Activated CD8-positive, alpha-beta T cell treated with anti-CD3 and anti-CD28 coated beads for 36 hours (primary cell): ENCODE measurements at regions of chr19 and their contacts with region 1.

Region 1: DNA sequence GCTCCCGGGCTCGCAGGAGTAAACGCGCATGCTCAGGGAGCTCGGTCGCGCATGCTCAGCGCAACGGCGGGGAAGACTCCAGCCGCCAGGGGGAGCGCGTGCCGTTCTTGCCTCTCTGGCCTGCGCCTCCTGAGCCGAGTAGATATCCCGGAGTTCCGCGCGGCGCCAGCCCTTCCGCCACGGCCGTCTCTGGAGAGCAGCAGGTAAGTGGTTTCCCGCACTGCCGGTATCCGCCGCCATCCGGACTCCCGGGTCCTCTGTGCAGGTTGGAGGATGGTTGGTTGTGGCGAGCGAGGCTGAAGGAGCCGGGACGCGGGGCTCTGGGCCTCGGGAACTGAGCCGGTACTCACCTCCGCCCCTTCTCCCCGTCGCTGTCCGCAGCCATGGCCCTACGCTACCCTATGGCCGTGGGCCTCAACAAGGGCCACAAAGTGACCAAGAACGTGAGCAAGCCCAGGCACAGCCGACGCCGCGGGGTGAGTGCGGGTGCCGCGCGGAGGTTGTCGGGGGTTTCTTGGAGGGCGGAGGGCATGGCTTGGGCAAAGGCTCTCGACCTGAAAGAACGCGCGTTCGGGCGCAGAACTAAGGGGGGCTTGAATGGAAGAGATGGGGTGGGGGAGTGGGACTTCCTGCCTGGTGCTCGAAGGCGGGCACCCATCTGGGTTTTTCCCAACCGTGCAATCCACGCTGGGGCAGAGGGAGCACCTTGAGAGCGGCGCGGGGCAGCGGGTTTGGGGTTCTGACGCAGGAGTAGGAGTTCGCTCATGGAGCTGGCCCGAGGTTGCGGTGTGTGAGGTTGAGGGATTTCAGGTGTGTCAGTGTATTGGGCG is at the start of gene RPL36:
- DNase-seq: peak; percentile 99
- ATAC-seq: peak; percentile 52
- H3K4me3 Mint-ChIP-seq: peak within 1 kb of the TSS; percentile 99
- H3K27ac Mint-ChIP-seq: peak within 1 kb of the TSS; percentile 97
- H3K4me1 Mint-ChIP-seq: peaks cover 20% of the 10 kb centered on the region
- H3K27me3 Mint-ChIP-seq: no peaks in the 10 kb centered on the region
- CTCF ChIP-seq: peak; percentile 98
- total RNA-seq, gene RPL36: 1,711 to 1,715 TPM

Region 2: DNA sequence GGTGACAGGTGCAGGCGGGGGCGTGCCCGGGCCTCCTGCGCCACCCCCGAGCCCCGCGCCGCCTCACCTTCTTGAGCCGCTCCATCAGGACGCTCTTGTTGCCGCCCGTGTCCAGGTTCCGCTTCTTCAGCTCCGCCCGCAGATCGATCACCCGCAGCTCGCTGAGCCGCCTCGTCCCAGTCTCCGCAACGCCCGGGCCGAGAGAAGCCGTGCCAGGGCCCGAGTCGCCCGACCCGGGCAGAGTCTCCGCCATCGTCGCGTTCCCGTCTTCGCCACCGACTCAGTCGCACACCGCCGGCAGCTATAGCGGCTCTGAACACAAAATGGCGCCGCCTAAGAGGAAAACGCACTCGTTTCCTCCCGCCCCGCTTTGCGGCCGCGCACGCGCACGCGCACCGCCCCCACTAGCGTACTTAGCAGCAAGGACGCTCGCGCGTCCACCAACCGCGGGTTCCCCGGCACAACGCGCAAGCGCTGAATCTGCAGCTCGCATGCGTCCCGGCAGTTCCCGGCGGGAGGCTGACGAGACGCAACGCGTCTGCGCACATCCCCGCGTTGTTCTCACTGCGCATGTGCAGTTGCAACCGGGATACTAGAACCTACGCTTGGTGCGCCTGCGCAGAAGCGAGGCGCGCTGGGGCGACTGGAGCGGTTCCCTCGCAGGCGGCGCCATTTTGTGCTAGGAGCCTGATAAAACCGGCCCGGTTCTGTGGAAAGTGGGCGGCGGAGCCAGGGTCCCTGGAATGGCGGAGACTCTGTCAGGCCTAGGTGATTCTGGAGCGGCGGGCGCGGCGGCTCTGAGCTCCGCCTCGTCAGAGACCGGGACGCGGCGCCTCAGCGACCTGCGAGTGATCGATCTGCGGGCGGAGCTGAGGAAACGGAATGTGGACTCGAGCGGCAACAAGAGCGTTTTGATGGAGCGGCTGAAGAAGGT is 67.6 kb before region 1 on chr19 and contains the starts of genes SAFB and SAFB2:
- CTCF ChIA-PET with region 1: interaction called, 32 read pairs
- POLR2A ChIA-PET with region 1: interaction called, 17 read pairs
- intact Hi-C with region 1: no loop called
- DNase-seq: peak; percentile 99
- ATAC-seq: peak; percentile 93
- H3K4me3 Mint-ChIP-seq: peak within 1 kb of the TSS; percentile 100
- H3K27ac Mint-ChIP-seq: peak within 1 kb of the TSS; percentile 100
- H3K4me1 Mint-ChIP-seq: peaks cover 64% of the 10 kb centered on the region
- H3K27me3 Mint-ChIP-seq: no peaks in the 10 kb centered on the region
- CTCF ChIP-seq: no peak
- total RNA-seq, gene SAFB: 124 to 132 TPM
- total RNA-seq, gene SAFB2: 70.8 to 78.0 TPM

Region 3: GRCh38 chr19:5637971-5638370 is 52.4 kb before region 1 on chr19:
- CTCF ChIA-PET with region 1: no interaction called
- POLR2A ChIA-PET with region 1: no interaction called
- intact Hi-C with region 1: no loop called
- DNase-seq: no peak
- ATAC-seq: no peak
- H3K4me3 Mint-ChIP-seq: no peak overlapping the region
- H3K27ac Mint-ChIP-seq: no peak overlapping the region
- H3K4me1 Mint-ChIP-seq: peaks cover 39% of the 10 kb centered on the region
- H3K27me3 Mint-ChIP-seq: no peaks in the 10 kb centered on the region
- CTCF ChIP-seq: no peak

Region 4: DNA sequence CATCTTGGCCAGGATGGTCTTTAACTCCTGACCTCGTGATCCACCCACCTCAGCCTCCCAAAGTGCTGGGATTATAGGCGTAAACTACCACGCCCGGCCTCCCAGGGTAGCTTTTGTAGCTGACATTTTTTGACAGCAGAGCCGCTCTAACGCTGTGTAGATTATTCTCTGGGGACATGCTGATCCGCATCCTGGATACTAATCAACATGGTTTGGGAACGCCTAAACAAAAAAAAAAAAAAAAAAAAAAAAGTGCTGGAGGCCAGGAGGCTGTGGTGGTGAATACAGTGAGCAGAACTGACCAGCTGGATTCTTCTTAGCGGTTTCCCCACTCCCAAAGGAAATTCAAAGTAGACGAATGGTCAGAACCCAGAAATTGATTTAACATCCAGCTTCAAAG is 24.5 kb after region 1 on chr19:
- CTCF ChIA-PET with region 1: interaction called, 23 read pairs
- POLR2A ChIA-PET with region 1: interaction called, 516 read pairs
- intact Hi-C with region 1: no loop called
- DNase-seq: no peak
- ATAC-seq: no peak
- H3K4me3 Mint-ChIP-seq: no peak overlapping the region
- H3K27ac Mint-ChIP-seq: no peak overlapping the region
- H3K4me1 Mint-ChIP-seq: peaks cover 24% of the 10 kb centered on the region
- H3K27me3 Mint-ChIP-seq: no peaks in the 10 kb centered on the region
- CTCF ChIP-seq: no peak

Region 5: GRCh38 chr19:5743630-5744029 is 53.3 kb after region 1 on chr19:
- CTCF ChIA-PET with region 1: no interaction called
- POLR2A ChIA-PET with region 1: no interaction called
- intact Hi-C with region 1: no loop called
- DNase-seq: no peak
- ATAC-seq: no peak
- H3K4me3 Mint-ChIP-seq: no peak overlapping the region
- H3K27ac Mint-ChIP-seq: no peak overlapping the region
- H3K4me1 Mint-ChIP-seq: no peaks in the 10 kb centered on the region
- H3K27me3 Mint-ChIP-seq: peaks cover 2% of the 10 kb centered on the region
- CTCF ChIP-seq: no peak

Region 6: GRCh38 chr19:5790573-5791520 is 100.5 kb after region 1 on chr19 and contains the start of gene DUS3L:
- CTCF ChIA-PET with region 1: interaction called, 7 read pairs
- POLR2A ChIA-PET with region 1: interaction called, 12 read pairs
- intact Hi-C with region 1: loop called (anchors 10 kb)
- DNase-seq: peak; percentile 99
- ATAC-seq: peak; percentile 96
- H3K4me3 Mint-ChIP-seq: peak within 1 kb of the TSS; percentile 100
- H3K27ac Mint-ChIP-seq: peak within 1 kb of the TSS; percentile 100
- H3K4me1 Mint-ChIP-seq: peaks cover 17% of the 10 kb centered on the region
- H3K27me3 Mint-ChIP-seq: no peaks in the 10 kb centered on the region
- CTCF ChIP-seq: no peak
- total RNA-seq, gene DUS3L: 69.6 to 74.5 TPM